Left ventricle myocardium superior (tissue), 1 donor: ENCODE measurements at regions of chr19 and their contacts with region 1.

Region 1: GRCh38 chr19:48780631-48781391 is 25.5 kb downstream of the FGF21 start:
- DNase-seq: no peak
- ATAC-seq: no peak

Region 2: GRCh38 chr19:48683349-48683748 is 97.5 kb before region 1 on chr19:
- intact Hi-C with region 1: no loop called
- DNase-seq: peak; percentile 80
- ATAC-seq: peak; percentile 83

Region 3: DNA sequence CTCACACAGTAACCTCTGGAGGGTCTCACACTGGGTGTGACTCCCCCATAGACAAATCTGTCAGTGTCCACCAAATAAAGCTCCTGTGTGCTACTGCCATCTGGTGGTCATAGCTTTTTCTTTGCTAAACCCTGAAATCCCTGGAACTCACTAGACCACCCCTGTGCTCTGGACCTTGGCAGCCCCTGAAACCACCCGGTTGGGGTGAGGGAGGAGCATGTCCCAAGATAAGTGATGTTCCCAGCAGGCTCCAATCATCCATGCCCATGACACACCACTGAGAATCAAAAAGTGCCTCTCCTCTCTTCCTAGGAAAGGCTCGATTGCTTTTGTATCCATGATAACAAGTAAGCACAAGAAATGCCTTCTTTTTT is 62.0 kb after region 1 on chr19:
- intact Hi-C with region 1: loop called (anchors 5 kb)
- DNase-seq: no peak
- ATAC-seq: peak; percentile 57